Activated naive CD4-positive, alpha-beta T cell treated with anti-CD3 and anti-CD28 coated beads for 36 hours (primary cell): ENCODE measurements at regions of chr10 and their contacts with region 1.

Region 1: GRCh38 chr10:45594276-45595106 is 78.1 kb downstream of the ZFAND4 start:
- DNase-seq: peak; percentile 87
- H3K4me3 Mint-ChIP-seq: peak overlapping the region; percentile 77
- H3K27ac Mint-ChIP-seq: peak overlapping the region; percentile 37
- H3K4me1 Mint-ChIP-seq: peaks cover 29% of the 10 kb centered on the region
- H3K27me3 Mint-ChIP-seq: no peaks in the 10 kb centered on the region

Region 2: GRCh38 chr10:45470098-45471012 is 124.1 kb before region 1 on chr10:
- CTCF ChIA-PET with region 1: interaction called, 3 read pairs
- intact Hi-C with region 1: loop called (anchors 2 kb)
- DNase-seq: peak; percentile 77
- H3K4me3 Mint-ChIP-seq: peak overlapping the region; percentile 48
- H3K27ac Mint-ChIP-seq: peak overlapping the region; percentile 87
- H3K4me1 Mint-ChIP-seq: peaks cover 27% of the 10 kb centered on the region
- H3K27me3 Mint-ChIP-seq: no peaks in the 10 kb centered on the region

Region 3: GRCh38 chr10:45505311-45505710 is 89.2 kb before region 1 on chr10:
- CTCF ChIA-PET with region 1: no interaction called
- intact Hi-C with region 1: no loop called
- DNase-seq: no peak
- H3K4me3 Mint-ChIP-seq: no peak overlapping the region
- H3K27ac Mint-ChIP-seq: no peak overlapping the region
- H3K4me1 Mint-ChIP-seq: peaks cover 7% of the 10 kb centered on the region
- H3K27me3 Mint-ChIP-seq: no peaks in the 10 kb centered on the region

Region 4: GRCh38 chr10:45557275-45557905 is 37.1 kb before region 1 on chr10:
- CTCF ChIA-PET with region 1: no interaction called
- intact Hi-C with region 1: loop called (anchors 2 kb)
- DNase-seq: peak; percentile 32
- H3K4me3 Mint-ChIP-seq: peak overlapping the region; percentile 29
- H3K27ac Mint-ChIP-seq: peak overlapping the region; percentile 13
- H3K4me1 Mint-ChIP-seq: peaks cover 34% of the 10 kb centered on the region
- H3K27me3 Mint-ChIP-seq: no peaks in the 10 kb centered on the region